Endothelial cell of umbilical vein (primary cell): ENCODE measurements at regions of chr1 and their contacts with region 1.

Region 1: GRCh38 chr1:82704393-82704792 is 903.7 kb downstream of the ADGRL2 start:
- DNase-seq: peak; percentile 98
- H3K4me3 ChIP-seq: no peak overlapping the region
- H3K27ac ChIP-seq: peak overlapping the region; percentile 77
- H3K4me1 ChIP-seq: peaks cover 30% of the 10 kb centered on the region
- H3K27me3 ChIP-seq: no peaks in the 10 kb centered on the region
- CTCF ChIP-seq: no peak
- POLR2A ChIP-seq: peak; percentile 80

Region 2: GRCh38 chr1:81681586-81682266 is 1022.7 kb before region 1 on chr1:
- CTCF ChIA-PET with region 1: no interaction called
- POLR2A ChIA-PET with region 1: no interaction called
- dilution Hi-C with region 1: no loop called
- intact Hi-C with region 1: loop called (anchors 5 kb)
- DNase-seq: peak; percentile 92
- H3K4me3 ChIP-seq: peak overlapping the region in 1 of 3 experiments; percentile 34
- H3K27ac ChIP-seq: peak overlapping the region; percentile 50
- H3K4me1 ChIP-seq: peaks cover 24% of the 10 kb centered on the region
- H3K27me3 ChIP-seq: no peaks in the 10 kb centered on the region
- CTCF ChIP-seq: no peak
- POLR2A ChIP-seq: no peak

Region 3: GRCh38 chr1:82401116-82401515 is 303.3 kb before region 1 on chr1:
- CTCF ChIA-PET with region 1: no interaction called
- POLR2A ChIA-PET with region 1: no interaction called
- dilution Hi-C with region 1: no loop called
- intact Hi-C with region 1: loop called (anchors 2 kb)
- DNase-seq: peak; percentile 67
- H3K4me3 ChIP-seq: no peak overlapping the region
- H3K27ac ChIP-seq: peak overlapping the region; percentile 68
- H3K4me1 ChIP-seq: peaks cover 37% of the 10 kb centered on the region
- H3K27me3 ChIP-seq: no peaks in the 10 kb centered on the region
- CTCF ChIP-seq: no peak
- POLR2A ChIP-seq: no peak

Region 4: DNA sequence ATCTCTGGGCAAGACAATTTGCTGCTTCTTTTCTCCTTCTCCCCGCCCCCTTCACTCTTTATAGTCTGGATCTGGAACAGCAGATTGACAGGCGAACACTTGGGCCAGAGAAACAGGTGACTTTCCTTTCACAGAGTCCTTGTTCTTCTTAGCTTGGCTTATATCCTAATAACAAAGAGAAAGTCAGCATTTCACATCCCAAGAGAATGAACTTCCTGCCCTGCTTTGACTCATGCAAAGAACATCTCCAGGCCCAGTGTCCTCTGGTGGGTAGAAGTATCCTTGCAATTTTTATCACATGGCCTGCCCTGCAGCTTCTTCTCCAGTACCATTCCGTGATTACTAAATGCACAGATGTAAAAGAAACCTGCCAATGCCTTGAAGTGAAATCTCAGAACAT is 139.2 kb before region 1 on chr1:
- CTCF ChIA-PET with region 1: no interaction called
- POLR2A ChIA-PET with region 1: no interaction called
- dilution Hi-C with region 1: no loop called
- intact Hi-C with region 1: loop called (anchors 1 kb)
- DNase-seq: no peak
- H3K4me3 ChIP-seq: no peak overlapping the region
- H3K27ac ChIP-seq: peak overlapping the region; percentile 22
- H3K4me1 ChIP-seq: peaks cover 11% of the 10 kb centered on the region
- H3K27me3 ChIP-seq: no peaks in the 10 kb centered on the region
- CTCF ChIP-seq: peak in 1 of 2 donors; percentile 6
- POLR2A ChIP-seq: no peak

Region 5: GRCh38 chr1:82792151-82792550 is 87.8 kb after region 1 on chr1:
- CTCF ChIA-PET with region 1: no interaction called
- POLR2A ChIA-PET with region 1: no interaction called
- dilution Hi-C with region 1: no loop called
- intact Hi-C with region 1: loop called (anchors 2 kb)
- DNase-seq: peak; percentile 83
- H3K4me3 ChIP-seq: no peak overlapping the region
- H3K27ac ChIP-seq: no peak overlapping the region
- H3K4me1 ChIP-seq: peaks cover 13% of the 10 kb centered on the region
- H3K27me3 ChIP-seq: no peaks in the 10 kb centered on the region
- CTCF ChIP-seq: no peak
- POLR2A ChIP-seq: no peak

Region 6: DNA sequence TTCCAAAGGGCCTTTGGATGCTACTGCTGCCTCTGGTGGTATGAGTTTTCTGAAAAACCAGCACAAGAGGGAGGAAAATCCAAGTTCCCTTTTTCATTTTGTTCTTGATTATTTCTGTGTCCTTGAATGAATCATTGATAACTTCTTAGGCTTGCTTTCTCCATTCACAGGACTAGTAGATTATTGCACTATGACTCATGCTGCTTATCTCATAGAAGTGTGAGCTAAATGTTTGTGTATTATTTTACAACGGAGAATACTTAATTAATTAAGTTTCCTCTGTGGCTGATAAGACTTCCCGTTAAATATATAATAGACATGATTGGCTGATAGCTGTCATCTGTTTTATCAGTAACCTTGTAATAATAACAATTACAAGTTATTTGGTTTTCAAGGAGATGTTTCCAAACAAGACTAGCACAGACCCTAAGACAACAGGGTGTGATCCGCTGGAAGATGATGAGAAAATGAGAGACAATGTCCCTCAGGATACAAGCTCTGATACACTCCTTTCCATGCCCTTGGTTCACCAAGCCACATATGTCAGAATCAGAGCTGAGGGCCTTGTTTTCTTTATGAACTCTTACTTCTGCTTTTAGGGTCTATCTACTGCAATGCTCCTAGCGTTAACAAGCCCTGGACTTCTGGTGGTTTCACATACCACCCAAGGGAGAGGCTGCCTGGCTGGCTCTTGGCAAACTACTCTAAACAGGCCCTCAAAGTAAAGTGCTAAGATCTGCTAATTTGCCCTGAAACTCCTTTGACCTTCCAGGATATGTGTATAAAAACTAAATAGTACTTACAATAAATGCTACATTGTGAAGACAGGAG is 216.2 kb after region 1 on chr1:
- CTCF ChIA-PET with region 1: no interaction called
- POLR2A ChIA-PET with region 1: no interaction called
- dilution Hi-C with region 1: no loop called
- intact Hi-C with region 1: loop called (anchors 1 kb)
- DNase-seq: peak; percentile 89
- H3K4me3 ChIP-seq: no peak overlapping the region
- H3K27ac ChIP-seq: peak overlapping the region; percentile 35
- H3K4me1 ChIP-seq: peaks cover 23% of the 10 kb centered on the region
- H3K27me3 ChIP-seq: peaks cover 16 to 25% of the 10 kb centered on the region in 2 experiments
- CTCF ChIP-seq: no peak
- POLR2A ChIP-seq: no peak

Region 7: GRCh38 chr1:82931006-82931405 is 226.6 kb after region 1 on chr1:
- CTCF ChIA-PET with region 1: no interaction called
- POLR2A ChIA-PET with region 1: no interaction called
- dilution Hi-C with region 1: no loop called
- intact Hi-C with region 1: loop called (anchors 1 kb)
- DNase-seq: peak; percentile 72
- H3K4me3 ChIP-seq: no peak overlapping the region
- H3K27ac ChIP-seq: no peak overlapping the region
- H3K4me1 ChIP-seq: peaks cover 14% of the 10 kb centered on the region
- H3K27me3 ChIP-seq: peaks cover 20 to 21% of the 10 kb centered on the region in 2 experiments
- CTCF ChIP-seq: no peak
- POLR2A ChIP-seq: no peak

Region 8: GRCh38 chr1:83593073-83593472 is 888.7 kb after region 1 on chr1:
- CTCF ChIA-PET with region 1: no interaction called
- POLR2A ChIA-PET with region 1: no interaction called
- dilution Hi-C with region 1: no loop called
- intact Hi-C with region 1: no loop called
- DNase-seq: no peak
- H3K4me3 ChIP-seq: no peak overlapping the region
- H3K27ac ChIP-seq: no peak overlapping the region
- H3K4me1 ChIP-seq: no peaks in the 10 kb centered on the region
- H3K27me3 ChIP-seq: no peaks in the 10 kb centered on the region
- CTCF ChIP-seq: no peak
- POLR2A ChIP-seq: no peak